Prostate gland (tissue), 2 donors: ENCODE measurements at regions of chr7 and their contacts with region 1.

Region 1: GRCh38 chr7:151341357-151342101 is at the start of gene NUB1:
- DNase-seq: peak; percentile 92
- H3K4me3 ChIP-seq: peak within 1 kb of the TSS; percentile 81 to 95
- H3K27ac ChIP-seq: peak within 1 kb of the TSS; percentile 72 to 80
- H3K4me1 ChIP-seq: peaks cover 7% of the 10 kb centered on the region
- H3K27me3 ChIP-seq: no peaks in the 10 kb centered on the region
- CTCF ChIP-seq: peak in 2 of 4 experiments; percentile 35 to 47
- POLR2A ChIP-seq: peak; percentile 86
- total RNA-seq, gene NUB1: 46.4 to 53.7 TPM

Region 2: DNA sequence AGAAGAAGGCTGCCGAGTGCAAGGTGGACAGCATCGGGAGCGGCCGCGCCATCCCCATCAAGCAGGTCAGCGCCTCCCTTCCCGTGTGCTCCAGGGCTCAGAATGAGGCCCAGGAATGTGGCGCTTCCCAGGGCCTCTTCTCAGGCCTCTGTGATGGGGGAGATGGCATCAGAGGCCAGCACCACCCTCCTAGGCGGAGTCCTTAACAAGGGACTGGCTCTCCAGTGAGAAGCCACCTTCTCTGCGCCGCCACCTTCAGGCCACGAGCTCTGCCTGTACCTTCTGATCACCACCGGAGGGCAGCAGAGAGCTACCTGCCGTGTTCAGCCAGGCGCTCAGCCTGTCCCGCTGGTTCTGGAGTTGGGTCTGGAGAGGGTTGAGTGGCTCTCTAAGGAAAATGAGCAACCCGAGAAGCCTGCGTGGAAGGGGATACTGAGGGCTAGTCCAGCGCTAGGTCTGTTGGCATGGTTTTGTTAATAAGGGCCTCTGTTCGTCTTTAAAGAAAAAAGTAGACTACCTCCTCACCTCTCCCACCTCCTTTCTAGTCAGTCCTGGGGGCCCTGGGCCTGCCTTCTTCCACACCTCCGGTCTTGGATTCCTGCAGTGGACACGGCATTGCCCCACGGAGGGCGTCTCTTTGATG is 217.6 kb before region 1 on chr7:
- intact Hi-C with region 1: no loop called
- DNase-seq: peak; percentile 91
- H3K4me3 ChIP-seq: no peak overlapping the region
- H3K27ac ChIP-seq: no peak overlapping the region
- H3K4me1 ChIP-seq: peaks cover 7% of the 10 kb centered on the region
- H3K27me3 ChIP-seq: no peaks in the 10 kb centered on the region
- CTCF ChIP-seq: peak; percentile 96 to 99 (median 98)
- POLR2A ChIP-seq: no peak

Region 3: DNA sequence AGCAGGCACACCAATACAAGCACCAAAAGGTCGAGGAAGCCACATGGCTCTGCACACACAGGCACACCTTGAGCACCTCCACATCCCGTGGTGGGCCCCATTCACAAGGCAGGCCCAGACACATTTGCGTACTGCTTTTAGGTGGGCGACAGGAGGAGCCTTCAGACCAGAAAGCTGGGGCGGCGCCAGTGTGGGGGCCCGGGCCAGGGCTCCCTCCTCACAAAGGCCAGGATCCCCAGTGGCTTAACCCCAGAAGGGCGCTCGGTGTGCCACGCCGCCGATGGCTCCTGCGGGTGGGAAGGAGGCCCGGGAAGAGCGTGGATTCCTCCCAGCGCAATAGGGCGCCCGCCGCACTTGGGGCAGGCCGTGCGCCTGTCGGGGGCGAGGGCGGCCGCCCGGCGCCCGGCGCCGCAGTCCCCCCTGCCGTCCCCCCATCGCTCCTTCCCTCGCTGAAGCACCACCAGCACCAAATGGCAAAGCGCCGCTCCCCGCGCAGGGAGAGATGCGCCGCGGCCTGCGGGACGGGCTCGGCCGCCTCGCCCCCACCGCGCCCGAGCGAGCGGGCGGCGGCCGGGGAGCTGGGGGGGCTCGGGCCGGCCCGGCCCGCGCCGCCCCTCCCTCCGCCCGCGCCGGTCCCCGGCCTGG is 90.1 kb before region 1 on chr7:
- intact Hi-C with region 1: loop called (anchors 5 kb)
- DNase-seq: no peak
- H3K4me3 ChIP-seq: peak overlapping the region; percentile 45
- H3K27ac ChIP-seq: peak overlapping the region; percentile 84 to 87
- H3K4me1 ChIP-seq: no peaks in the 10 kb centered on the region
- H3K27me3 ChIP-seq: no peaks in the 10 kb centered on the region
- CTCF ChIP-seq: no peak
- POLR2A ChIP-seq: no peak